Colonic mucosa (tissue), 4 donors: ENCODE measurements at regions of chr4 and their contacts with region 1.

Region 1: GRCh38 chr4:37603070-37603468 is 83.1 kb downstream of the RELL1 start:
- DNase-seq: peak; percentile 91
- H3K4me3 ChIP-seq: no peak overlapping the region
- H3K27ac ChIP-seq: no peak overlapping the region
- H3K4me1 ChIP-seq: no peaks in the 10 kb centered on the region
- H3K27me3 ChIP-seq: no peaks in the 10 kb centered on the region
- CTCF ChIP-seq: peak; percentile 94

Region 2: DNA sequence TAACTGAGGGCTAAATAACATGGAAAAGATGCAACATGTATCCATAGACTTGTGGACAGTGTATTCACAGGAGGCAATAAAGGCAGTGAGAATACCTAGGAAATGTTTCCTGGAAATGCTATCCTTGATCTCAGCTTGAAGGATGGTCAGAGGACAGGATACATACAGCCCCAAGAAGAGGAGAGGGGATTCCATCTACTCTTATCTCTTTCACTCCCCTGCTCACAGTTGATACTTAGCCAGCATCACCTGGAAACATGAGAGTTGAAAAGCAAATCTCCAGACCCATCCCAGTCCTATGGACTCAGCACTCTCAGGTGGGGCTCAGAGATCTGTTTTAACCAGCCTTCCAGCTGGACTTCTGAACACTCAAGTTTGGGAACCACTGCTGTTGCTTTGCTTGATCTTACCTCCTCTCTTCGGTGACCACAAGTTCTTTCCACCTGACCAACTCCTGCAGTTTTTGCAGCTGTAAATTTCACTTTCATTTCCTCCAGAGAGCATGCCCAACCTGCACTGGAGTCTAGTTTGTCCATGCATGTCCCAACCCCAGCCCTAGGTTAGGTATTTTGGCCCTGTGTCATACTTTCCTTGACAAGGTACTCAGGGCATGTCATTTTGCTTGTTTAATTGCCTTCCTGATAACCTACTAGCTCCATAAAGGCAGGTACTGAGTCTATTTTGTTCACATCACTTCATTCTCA is 72.7 kb after region 1 on chr4:
- intact Hi-C with region 1: loop called (anchors 10 kb)
- DNase-seq: peak; percentile 41
- H3K4me3 ChIP-seq: no peak overlapping the region
- H3K27ac ChIP-seq: no peak overlapping the region
- H3K4me1 ChIP-seq: peaks cover 14% of the 10 kb centered on the region
- H3K27me3 ChIP-seq: no peaks in the 10 kb centered on the region
- CTCF ChIP-seq: no peak

Region 3: DNA sequence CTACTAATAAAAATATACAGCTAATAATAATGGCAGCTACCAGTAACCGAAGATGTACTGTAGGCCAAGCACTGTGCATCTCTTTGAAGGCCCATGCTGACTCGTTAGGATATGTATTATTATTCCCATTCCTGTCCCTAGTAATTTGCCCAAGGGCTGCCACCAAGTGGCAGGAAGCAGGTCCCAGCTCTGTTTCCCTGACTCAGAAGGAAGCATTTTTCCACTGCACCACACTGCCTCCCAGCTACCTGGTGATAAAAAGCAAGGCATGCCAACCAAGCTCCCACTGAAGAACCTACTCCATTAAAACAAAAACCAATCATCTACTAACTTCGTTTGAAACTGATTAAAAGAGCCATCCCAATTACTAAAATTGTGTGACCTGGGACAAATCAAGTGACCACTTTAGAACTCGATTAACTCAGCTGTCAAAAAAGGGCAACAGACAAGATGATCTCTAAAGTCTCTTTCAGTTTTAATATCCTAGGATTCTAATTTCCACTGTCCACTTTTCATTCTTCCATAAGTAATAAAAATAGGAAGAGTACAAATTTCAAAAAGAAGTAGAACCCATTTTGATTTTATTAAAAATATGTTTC is 199.1 kb after region 1 on chr4:
- intact Hi-C with region 1: loop called (anchors 5 kb)
- DNase-seq: peak; percentile 68
- H3K4me3 ChIP-seq: no peak overlapping the region
- H3K27ac ChIP-seq: no peak overlapping the region
- H3K4me1 ChIP-seq: no peaks in the 10 kb centered on the region
- H3K27me3 ChIP-seq: no peaks in the 10 kb centered on the region
- CTCF ChIP-seq: peak; percentile 68

Region 4: DNA sequence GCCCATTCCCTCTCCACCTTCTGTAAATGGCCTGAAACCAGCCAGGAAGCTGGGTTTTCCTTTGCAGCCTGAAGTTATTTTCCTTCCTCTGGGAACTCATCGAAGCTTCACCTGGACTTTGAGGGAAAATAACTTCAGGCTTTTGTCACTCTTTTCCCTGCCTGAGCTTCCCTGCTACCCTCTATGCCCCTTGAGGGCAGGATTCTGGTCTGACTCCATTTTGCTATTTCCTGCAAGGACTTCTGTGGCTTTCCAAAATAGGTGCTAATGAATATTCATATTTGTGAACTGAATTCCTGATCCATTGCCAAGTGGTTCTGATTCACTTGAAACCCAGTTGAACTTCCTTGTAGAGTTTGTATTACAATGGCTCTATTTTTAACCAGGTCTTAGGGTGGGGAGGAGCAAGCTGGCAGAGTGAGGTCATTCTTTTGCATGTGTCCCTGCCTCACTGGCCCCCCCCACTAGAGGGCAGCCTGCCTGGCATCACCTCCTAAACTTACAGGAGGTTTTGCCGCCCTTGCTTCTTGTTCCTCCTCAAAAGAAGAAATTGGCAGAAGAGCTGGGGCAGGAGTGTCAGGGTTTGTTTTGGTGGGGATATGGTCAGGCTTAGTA is 367.5 kb after region 1 on chr4:
- intact Hi-C with region 1: no loop called
- DNase-seq: peak; percentile 85
- H3K4me3 ChIP-seq: no peak overlapping the region
- H3K27ac ChIP-seq: peak overlapping the region; percentile 29
- H3K4me1 ChIP-seq: peaks cover 4% of the 10 kb centered on the region
- H3K27me3 ChIP-seq: no peaks in the 10 kb centered on the region
- CTCF ChIP-seq: peak; percentile 65